A673 (cell line): ENCODE measurements at regions of chr1 and their contacts with region 1.

Region 1: DNA sequence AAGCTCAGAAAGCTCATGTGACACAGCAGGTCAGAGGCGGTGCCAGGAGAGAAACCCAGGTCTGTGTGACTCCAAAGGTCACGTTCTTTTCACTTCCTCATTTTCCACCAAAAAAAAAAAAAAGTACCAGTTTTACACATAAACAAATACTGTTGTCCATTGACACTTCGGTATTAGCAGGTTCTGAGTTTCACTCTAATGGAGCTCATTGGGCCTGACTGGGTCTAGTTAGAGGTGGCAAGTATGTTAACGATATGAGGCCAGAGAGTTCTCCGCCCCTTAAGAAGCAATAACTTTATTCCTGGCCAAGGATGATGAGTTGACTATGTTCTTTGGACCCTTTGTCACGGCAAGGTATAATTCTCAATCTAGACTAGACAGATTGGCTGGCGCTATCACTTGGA is 30.0 kb upstream of the SDE2 start:
- DNase-seq: no peak
- H3K4me3 ChIP-seq: no peak overlapping the region
- H3K27ac ChIP-seq: no peak overlapping the region
- H3K4me1 ChIP-seq: no peaks in the 10 kb centered on the region
- H3K27me3 ChIP-seq: no peaks in the 10 kb centered on the region
- CTCF ChIP-seq: no peak

Region 2: DNA sequence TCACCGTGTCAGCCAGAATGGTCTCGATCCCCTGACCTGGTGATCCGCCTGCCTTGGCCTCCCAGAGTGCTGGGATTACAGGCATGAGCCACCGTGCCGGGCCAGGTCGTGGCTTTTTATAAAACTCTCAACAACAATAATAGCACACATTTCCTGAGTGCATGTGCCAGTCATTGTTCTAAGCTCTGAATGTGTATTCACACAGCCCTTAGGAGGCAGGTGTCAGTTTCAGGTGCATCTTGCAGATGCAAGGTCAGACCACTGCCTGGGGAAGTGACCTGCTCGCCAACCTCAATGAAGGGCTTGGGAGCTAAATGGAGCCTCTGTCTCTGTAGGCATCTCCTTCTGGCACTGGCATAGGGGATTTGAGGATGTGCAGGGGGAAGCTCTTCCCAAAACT is 86.5 kb before region 1 on chr1:
- CTCF ChIA-PET with region 1: no interaction called
- POLR2A ChIA-PET with region 1: interaction called, 20 read pairs
- intact Hi-C with region 1: no loop called
- DNase-seq: no peak
- H3K4me3 ChIP-seq: no peak overlapping the region
- H3K27ac ChIP-seq: no peak overlapping the region
- H3K4me1 ChIP-seq: no peaks in the 10 kb centered on the region
- H3K27me3 ChIP-seq: no peaks in the 10 kb centered on the region
- CTCF ChIP-seq: no peak

Region 3: DNA sequence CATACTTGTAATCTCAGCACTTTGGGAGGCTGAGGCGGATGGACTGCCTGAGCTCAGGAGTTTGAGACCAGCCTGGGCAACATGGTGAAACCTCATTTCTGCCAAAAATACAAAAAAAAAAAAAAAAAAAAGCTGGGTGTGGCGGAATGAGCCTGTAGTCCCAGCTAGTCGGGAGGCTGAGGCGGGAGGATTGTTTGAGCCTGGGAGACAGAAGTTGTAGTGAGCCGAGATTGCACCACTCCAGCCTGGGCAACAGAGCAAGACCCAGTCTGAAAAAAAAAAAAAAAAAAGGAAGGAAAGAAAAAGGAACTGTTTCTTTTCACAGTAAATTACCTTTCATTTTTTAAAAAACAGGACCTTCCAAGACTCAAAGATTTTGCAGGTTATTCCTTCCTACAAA is 250.4 kb after region 1 on chr1:
- CTCF ChIA-PET with region 1: no interaction called
- POLR2A ChIA-PET with region 1: no interaction called
- intact Hi-C with region 1: no loop called
- DNase-seq: no peak
- H3K4me3 ChIP-seq: no peak overlapping the region
- H3K27ac ChIP-seq: no peak overlapping the region
- H3K4me1 ChIP-seq: no peaks in the 10 kb centered on the region
- H3K27me3 ChIP-seq: no peaks in the 10 kb centered on the region
- CTCF ChIP-seq: no peak